ENCODE measurements at regions of chr11 and their contacts with region 1.

Region 1: GRCh38 chr11:73876424-73877300 is at the starts of genes COA4 and PAAF1:
- DNase-seq: peak; percentile 97
- ATAC-seq: peak; percentile 98
- H3K4me3 ChIP-seq: peak within 1 kb of the TSS; percentile 76 to 88 (median 83)
- H3K4me3 Mint-ChIP-seq: peak within 1 kb of the TSS; percentile 99
- H3K27ac ChIP-seq: peak within 1 kb of the TSS; percentile 45 to 71
- H3K27ac Mint-ChIP-seq: peak within 1 kb of the TSS; percentile 99
- H3K4me1 ChIP-seq: peaks cover 19 to 24% of the 10 kb centered on the region in 2 donors
- H3K4me1 Mint-ChIP-seq: peaks cover 31% of the 10 kb centered on the region
- H3K27me3 ChIP-seq: no peaks in the 10 kb centered on the region
- H3K27me3 Mint-ChIP-seq: no peaks in the 10 kb centered on the region
- CTCF ChIP-seq: no peak
- total RNA-seq, gene COA4: 59.6 and 60.5 TPM in 2 replicates
- total RNA-seq, gene PAAF1: 19.5 and 19.9 TPM in 2 replicates

Region 2: GRCh38 chr11:73507086-73507485 is 369.6 kb before region 1 on chr11:
- CTCF ChIA-PET with region 1: no interaction called
- POLR2A ChIA-PET with region 1: no interaction called
- intact Hi-C with region 1: no loop called
- DNase-seq: no peak
- ATAC-seq: no peak
- H3K4me3 ChIP-seq: no peak overlapping the region
- H3K4me3 Mint-ChIP-seq: no peak overlapping the region
- H3K27ac ChIP-seq: no peak overlapping the region
- H3K27ac Mint-ChIP-seq: no peak overlapping the region
- H3K4me1 ChIP-seq: no peaks in the 10 kb centered on the region
- H3K4me1 Mint-ChIP-seq: peaks cover 15% of the 10 kb centered on the region
- H3K27me3 ChIP-seq: no peaks in the 10 kb centered on the region
- H3K27me3 Mint-ChIP-seq: no peaks in the 10 kb centered on the region
- CTCF ChIP-seq: no peak

Region 3: DNA sequence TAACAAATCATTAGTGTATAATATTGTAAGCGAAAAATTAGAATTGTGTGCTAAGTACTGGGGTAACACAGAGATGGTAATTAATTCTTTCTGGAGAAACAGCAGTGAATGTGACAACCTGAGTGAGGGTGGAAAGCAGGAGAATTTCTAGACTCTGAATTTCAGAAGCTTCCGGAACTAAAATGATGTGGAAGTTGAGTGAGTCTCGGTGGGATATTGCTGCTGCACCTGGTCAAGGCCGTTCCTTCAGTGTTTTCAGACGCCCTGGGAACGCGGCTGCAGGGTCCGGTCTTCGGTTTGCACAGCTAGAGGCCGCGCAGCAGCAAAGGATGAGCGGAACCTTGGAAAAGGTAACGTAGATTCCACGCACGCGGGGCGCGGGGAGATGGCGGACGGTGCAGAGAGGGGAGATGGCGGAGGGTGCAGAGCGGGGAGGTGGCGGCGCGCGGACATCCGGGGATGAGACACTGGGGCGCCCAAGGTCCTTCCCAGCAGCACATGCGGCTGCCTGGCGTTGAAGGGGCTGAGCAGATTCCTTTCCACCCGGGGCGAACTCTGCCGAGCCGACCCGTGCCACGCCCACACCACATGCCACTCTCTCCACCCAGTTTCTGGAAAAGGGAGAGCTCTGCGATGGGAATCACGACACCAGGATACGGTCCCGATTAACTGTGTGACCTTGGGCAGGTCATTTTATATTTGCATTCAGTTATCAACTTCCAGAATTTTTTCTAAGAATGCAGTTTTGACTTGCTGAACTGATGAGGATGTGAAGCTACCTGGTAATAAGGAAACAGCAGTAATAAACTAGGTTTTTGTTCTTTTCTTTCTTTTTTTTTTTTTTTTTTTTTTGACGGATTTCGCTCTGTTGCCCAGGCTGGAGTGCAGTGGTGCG is 88.8 kb before region 1 on chr11 and contains the start of gene MRPL48:
- CTCF ChIA-PET with region 1: no interaction called
- POLR2A ChIA-PET with region 1: no interaction called
- intact Hi-C with region 1: loop called (anchors 2 kb)
- DNase-seq: peak; percentile 94
- ATAC-seq: peak; percentile 100
- H3K4me3 ChIP-seq: peak within 1 kb of the TSS; percentile 67 to 98 (median 89)
- H3K4me3 Mint-ChIP-seq: peak within 1 kb of the TSS; percentile 99
- H3K27ac ChIP-seq: peak within 1 kb of the TSS; percentile 75 to 77
- H3K27ac Mint-ChIP-seq: peak within 1 kb of the TSS; percentile 98
- H3K4me1 ChIP-seq: peaks cover 13 to 14% of the 10 kb centered on the region in 2 donors
- H3K4me1 Mint-ChIP-seq: peaks cover 20% of the 10 kb centered on the region
- H3K27me3 ChIP-seq: no peaks in the 10 kb centered on the region
- H3K27me3 Mint-ChIP-seq: no peaks in the 10 kb centered on the region
- CTCF ChIP-seq: no peak
- total RNA-seq, gene MRPL48: 26.6 and 28.3 TPM in 2 replicates

Region 4: DNA sequence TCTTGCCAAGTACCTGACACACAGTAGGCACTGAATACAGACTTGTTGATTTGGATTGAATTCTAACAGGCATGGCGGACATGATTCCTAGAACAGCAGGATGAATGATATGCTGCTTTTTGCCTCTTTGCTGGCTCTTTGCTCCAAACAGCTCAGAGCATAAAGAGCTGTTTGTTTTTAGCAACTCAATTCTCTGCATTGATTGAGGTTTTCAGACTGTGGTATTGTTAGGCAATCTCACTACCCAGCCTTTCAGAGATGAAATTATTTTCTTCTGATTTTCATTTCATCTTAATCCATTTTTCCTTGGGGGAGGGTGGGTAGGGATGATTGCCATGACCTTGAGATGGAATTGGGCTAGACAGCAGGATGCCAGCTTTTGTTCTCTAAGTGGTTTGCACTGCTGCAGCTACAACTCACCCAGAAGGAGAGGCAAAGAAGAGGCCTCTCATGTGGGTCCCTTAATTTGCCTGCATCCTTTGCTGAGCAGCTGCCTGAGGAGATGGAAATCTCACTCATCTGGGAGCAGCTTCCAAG is 20.6 kb before region 1 on chr11:
- CTCF ChIA-PET with region 1: no interaction called
- POLR2A ChIA-PET with region 1: no interaction called
- intact Hi-C with region 1: no loop called
- DNase-seq: no peak
- ATAC-seq: no peak
- H3K4me3 ChIP-seq: no peak overlapping the region
- H3K4me3 Mint-ChIP-seq: no peak overlapping the region
- H3K27ac ChIP-seq: no peak overlapping the region
- H3K27ac Mint-ChIP-seq: no peak overlapping the region
- H3K4me1 ChIP-seq: no peaks in the 10 kb centered on the region
- H3K4me1 Mint-ChIP-seq: no peaks in the 10 kb centered on the region
- H3K27me3 ChIP-seq: no peaks in the 10 kb centered on the region
- H3K27me3 Mint-ChIP-seq: no peaks in the 10 kb centered on the region
- CTCF ChIP-seq: no peak

Region 5: DNA sequence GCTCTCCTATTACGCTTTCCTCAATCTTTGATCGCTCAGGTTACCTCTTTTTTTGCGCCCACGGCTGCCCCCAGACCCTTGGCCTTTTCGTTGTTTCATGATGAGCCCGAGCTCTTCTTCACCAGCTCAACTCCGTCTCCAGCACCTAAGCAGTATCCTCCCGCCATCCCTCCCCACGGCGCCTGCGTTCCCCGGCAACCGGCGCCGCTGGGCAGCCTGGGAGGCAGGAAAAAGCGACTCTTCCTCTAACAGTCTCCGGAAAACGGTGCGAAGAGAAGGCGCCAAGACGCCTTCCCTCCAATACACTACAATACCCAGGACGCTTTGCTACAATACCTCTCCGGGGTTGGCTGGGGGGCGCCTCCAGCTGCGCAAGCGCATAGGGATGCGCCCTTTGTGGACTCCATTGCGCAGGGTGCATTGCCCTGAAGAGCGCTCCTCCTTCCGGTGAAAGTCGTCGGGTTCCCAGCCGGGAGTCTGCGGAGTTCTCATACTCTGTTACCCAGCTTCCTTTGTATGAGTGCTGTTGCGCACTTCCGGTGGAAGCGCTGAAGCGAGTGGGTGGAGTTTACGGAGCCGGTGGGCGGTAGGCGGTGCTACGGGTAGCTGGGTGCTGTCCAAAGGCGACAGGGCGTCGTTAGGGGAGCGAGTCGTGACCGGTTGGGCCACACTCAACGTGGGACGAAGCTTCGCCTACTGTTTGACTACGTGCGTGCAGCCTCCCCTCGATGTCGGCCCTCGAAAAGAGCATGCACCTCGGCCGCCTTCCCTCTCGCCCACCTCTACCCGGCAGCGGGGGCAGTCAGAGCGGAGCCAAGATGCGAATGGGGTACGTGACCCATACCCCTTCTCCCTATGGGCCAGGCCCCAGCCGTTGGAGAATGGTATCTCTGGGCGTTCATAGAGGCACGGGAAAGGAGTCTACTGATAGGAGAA is 294.3 kb after region 1 on chr11 and contains the starts of genes C2CD3 and PPME1:
- CTCF ChIA-PET with region 1: no interaction called
- POLR2A ChIA-PET with region 1: no interaction called
- intact Hi-C with region 1: loop called (anchors 2 kb)
- DNase-seq: peak; percentile 99
- ATAC-seq: peak; percentile 94
- H3K4me3 ChIP-seq: peak within 1 kb of the TSS; percentile 82 to 95 (median 85)
- H3K4me3 Mint-ChIP-seq: no peak within 1 kb of the TSS
- H3K27ac ChIP-seq: peak within 1 kb of the TSS; percentile 73 to 80
- H3K27ac Mint-ChIP-seq: no peak within 1 kb of the TSS
- H3K4me1 ChIP-seq: peaks cover 22 to 26% of the 10 kb centered on the region in 2 donors
- H3K4me1 Mint-ChIP-seq: peaks cover 6% of the 10 kb centered on the region
- H3K27me3 ChIP-seq: no peaks in the 10 kb centered on the region
- H3K27me3 Mint-ChIP-seq: no peaks in the 10 kb centered on the region
- CTCF ChIP-seq: peak; percentile 11
- total RNA-seq, gene C2CD3: 63.9 and 69.0 TPM in 2 replicates
- total RNA-seq, gene PPME1: 18.7 and 23.6 TPM in 2 replicates